AG04450 (cell line): ENCODE measurements at regions of chr6 and their contacts with region 1.

Region 1: GRCh38 chr6:12637960-12638641 is 78.5 kb upstream of the PHACTR1 start:
- DNase-seq: no peak
- H3K4me3 ChIP-seq: no peak overlapping the region
- H3K27ac ChIP-seq: no peak overlapping the region
- H3K27me3 ChIP-seq: no peaks in the 10 kb centered on the region
- CTCF ChIP-seq: peak; percentile 72

Region 2: DNA sequence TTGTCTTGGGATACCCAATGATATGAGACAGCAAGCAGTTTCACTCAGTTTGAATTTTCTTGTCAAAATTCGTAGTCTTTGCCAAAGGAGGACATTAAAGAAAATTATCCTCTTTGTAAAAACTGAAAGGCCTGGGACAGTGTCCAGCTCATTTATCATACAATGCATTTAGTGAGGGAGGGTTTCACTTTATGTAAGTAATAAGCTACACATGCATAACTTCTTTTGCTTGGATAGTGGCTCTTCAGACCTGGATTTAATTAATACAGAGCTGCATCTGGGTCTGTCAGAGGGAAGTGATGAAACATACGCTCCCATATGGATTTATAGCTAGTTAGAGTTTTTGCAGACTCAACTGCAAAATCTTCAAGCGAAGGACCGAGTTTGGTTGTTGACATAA is 254.1 kb after region 1 on chr6:
- CTCF ChIA-PET with region 1: interaction called, 25 read pairs
- POLR2A ChIA-PET with region 1: no interaction called
- DNase-seq: no peak
- H3K4me3 ChIP-seq: no peak overlapping the region
- H3K27ac ChIP-seq: no peak overlapping the region
- H3K27me3 ChIP-seq: no peaks in the 10 kb centered on the region
- CTCF ChIP-seq: no peak